Caco-2 (cell line): ENCODE measurements at regions of chr9 and their contacts with region 1.

Region 1: GRCh38 chr9:112819635-112820496 is 69.3 kb downstream of the SNX30 start:
- DNase-seq: peak; percentile 51 to 57
- H3K4me3 ChIP-seq: no peak overlapping the region
- H3K4me3 Mint-ChIP-seq: no peak overlapping the region
- H3K27ac Mint-ChIP-seq: peak overlapping the region; percentile 14
- H3K4me1 ChIP-seq: peaks cover 4% of the 10 kb centered on the region; the same call in 1 of the 2 replicates
- H3K4me1 Mint-ChIP-seq: peaks cover 13% of the 10 kb centered on the region
- H3K27me3 ChIP-seq: no peaks in the 10 kb centered on the region
- H3K27me3 Mint-ChIP-seq: no peaks in the 10 kb centered on the region
- CTCF ChIP-seq: peak; percentile 65 to 72

Region 2: DNA sequence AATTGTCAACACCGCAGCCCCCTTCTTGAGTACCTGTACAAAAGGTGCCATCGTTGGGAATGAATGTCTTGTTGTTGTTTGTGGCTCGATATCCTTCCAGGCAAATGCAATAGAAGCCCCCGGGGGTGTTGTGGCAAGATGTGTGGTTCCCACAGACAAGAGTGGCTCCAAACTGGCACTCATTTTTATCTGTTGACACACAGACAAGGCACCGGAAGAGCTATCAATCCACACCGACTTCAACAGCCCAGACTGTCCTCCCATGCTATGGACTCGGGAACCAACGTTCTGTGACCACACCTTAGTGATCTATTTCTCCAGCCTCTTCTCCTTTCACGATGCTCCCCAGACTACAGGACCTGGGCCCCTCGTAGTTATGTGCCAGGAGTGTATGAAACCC is 670.7 kb before region 1 on chr9:
- CTCF ChIA-PET with region 1: no interaction called
- POLR2A ChIA-PET with region 1: no interaction called
- intact Hi-C with region 1: no loop called
- DNase-seq: no peak
- H3K4me3 ChIP-seq: no peak overlapping the region
- H3K4me3 Mint-ChIP-seq: no peak overlapping the region
- H3K27ac Mint-ChIP-seq: no peak overlapping the region
- H3K4me1 ChIP-seq: no peaks in the 10 kb centered on the region
- H3K4me1 Mint-ChIP-seq: peaks cover 10% of the 10 kb centered on the region
- H3K27me3 ChIP-seq: no peaks in the 10 kb centered on the region
- H3K27me3 Mint-ChIP-seq: no peaks in the 10 kb centered on the region
- CTCF ChIP-seq: no peak

Region 3: GRCh38 chr9:112717661-112718341 is 102.1 kb before region 1 on chr9 and contains the start of gene INIP:
- CTCF ChIA-PET with region 1: interaction called, 6 read pairs
- POLR2A ChIA-PET with region 1: interaction called, 4 read pairs
- intact Hi-C with region 1: loop called (anchors 5 kb)
- DNase-seq: peak; percentile 98
- H3K4me3 ChIP-seq: peak within 1 kb of the TSS; percentile 46
- H3K4me3 Mint-ChIP-seq: peak within 1 kb of the TSS; percentile 88
- H3K27ac Mint-ChIP-seq: peak within 1 kb of the TSS; percentile 87
- H3K4me1 ChIP-seq: no peaks in the 10 kb centered on the region
- H3K4me1 Mint-ChIP-seq: peaks cover 7% of the 10 kb centered on the region
- H3K27me3 ChIP-seq: no peaks in the 10 kb centered on the region
- H3K27me3 Mint-ChIP-seq: no peaks in the 10 kb centered on the region
- CTCF ChIP-seq: no peak
- total RNA-seq, gene INIP: 30.2 and 31.9 TPM in 2 replicates

Region 4: GRCh38 chr9:112731971-112732370 is 87.9 kb before region 1 on chr9:
- CTCF ChIA-PET with region 1: no interaction called
- POLR2A ChIA-PET with region 1: no interaction called
- intact Hi-C with region 1: no loop called
- DNase-seq: peak; percentile 52 to 80
- H3K4me3 ChIP-seq: no peak overlapping the region
- H3K4me3 Mint-ChIP-seq: peak overlapping the region; percentile 47
- H3K27ac Mint-ChIP-seq: peak overlapping the region; percentile 69
- H3K4me1 ChIP-seq: peaks cover 11% of the 10 kb centered on the region
- H3K4me1 Mint-ChIP-seq: peaks cover 8% of the 10 kb centered on the region
- H3K27me3 ChIP-seq: no peaks in the 10 kb centered on the region
- H3K27me3 Mint-ChIP-seq: no peaks in the 10 kb centered on the region
- CTCF ChIP-seq: no peak

Region 5: DNA sequence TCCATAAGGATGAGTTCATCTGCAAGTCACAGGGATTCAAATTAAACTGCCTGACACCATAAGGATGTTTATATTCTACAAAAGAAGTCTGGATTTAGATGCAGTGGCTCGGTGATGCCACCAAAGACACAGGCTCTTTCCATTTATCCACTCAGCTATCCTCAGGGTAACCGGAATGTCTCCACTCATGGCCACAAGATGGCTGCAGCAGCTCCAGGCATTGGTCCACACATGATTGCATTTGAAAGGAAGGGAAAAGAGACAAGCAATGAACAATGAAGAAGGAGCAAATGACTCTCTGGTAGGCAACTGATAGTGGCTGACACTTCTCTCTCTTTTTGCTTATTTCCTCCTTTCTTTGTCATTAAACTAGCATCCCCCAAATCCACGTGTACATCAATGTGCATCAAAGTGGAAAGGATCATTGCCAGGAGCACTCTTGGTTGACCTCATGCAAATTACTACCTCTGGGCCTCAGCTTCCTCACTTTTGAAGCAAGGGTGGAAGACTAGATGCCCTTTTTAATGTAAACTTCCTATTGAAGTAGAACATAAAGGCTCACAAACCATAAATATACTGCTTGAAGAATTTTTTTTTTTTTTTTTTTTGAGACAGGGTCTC is 76.5 kb before region 1 on chr9:
- CTCF ChIA-PET with region 1: interaction called, 5 read pairs
- POLR2A ChIA-PET with region 1: no interaction called
- intact Hi-C with region 1: loop called (anchors 1 kb)
- DNase-seq: peak in 1 of 2 experiments; percentile 36
- H3K4me3 ChIP-seq: no peak overlapping the region
- H3K4me3 Mint-ChIP-seq: no peak overlapping the region
- H3K27ac Mint-ChIP-seq: no peak overlapping the region
- H3K4me1 ChIP-seq: peaks cover 6% of the 10 kb centered on the region; the same call in 1 of the 2 replicates
- H3K4me1 Mint-ChIP-seq: peaks cover 6% of the 10 kb centered on the region
- H3K27me3 ChIP-seq: no peaks in the 10 kb centered on the region
- H3K27me3 Mint-ChIP-seq: no peaks in the 10 kb centered on the region
- CTCF ChIP-seq: peak; percentile 24 to 38